Motor neuron (in vitro differentiated cells): ENCODE measurements at regions of chrX and their contacts with region 1.

Region 1: GRCh38 chrX:31658360-31658759 is 586.5 kb upstream of the FTHL17 start:
- ATAC-seq: no peak
- H3K4me3 ChIP-seq: no peak overlapping the region
- H3K27ac ChIP-seq: no peak overlapping the region
- H3K4me1 ChIP-seq: no peaks in the 10 kb centered on the region

Region 2: DNA sequence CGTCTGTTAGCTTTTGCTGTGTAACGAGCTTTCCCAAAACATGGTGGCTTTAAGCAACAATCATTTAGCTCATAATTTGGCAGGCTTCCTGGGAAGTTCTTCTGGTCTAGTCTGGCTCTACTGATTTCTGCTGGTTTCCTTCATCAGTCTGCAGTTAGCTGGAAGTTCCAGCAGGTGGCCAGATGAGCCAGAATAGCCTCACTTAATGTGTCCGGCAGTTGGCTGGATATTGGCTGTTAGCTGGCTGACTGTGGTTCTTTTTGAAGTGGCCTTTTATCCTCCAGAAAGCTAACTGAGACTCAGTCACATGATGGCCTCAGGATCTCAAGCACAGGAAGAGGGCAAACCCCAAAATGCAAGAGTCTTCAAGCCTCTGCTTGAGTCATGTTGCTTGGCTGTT is 621.5 kb before region 1 on chrX:
- in situ Hi-C with region 1: loop called in 3 of 9 experiments (anchors 10 to 25 kb)
- ATAC-seq: peak in 4 of 8 experiments; percentile 21 to 82 (median 74)
- H3K4me3 ChIP-seq: no peak overlapping the region
- H3K27ac ChIP-seq: no peak overlapping the region
- H3K4me1 ChIP-seq: peaks cover 2 to 3% of the 10 kb centered on the region in 2 donors

Region 3: GRCh38 chrX:31333181-31333831 is 325.1 kb before region 1 on chrX:
- in situ Hi-C with region 1: loop called in 1 of 9 experiments (anchors 25 kb)
- ATAC-seq: no peak
- H3K4me3 ChIP-seq: no peak overlapping the region
- H3K27ac ChIP-seq: no peak overlapping the region
- H3K4me1 ChIP-seq: no peaks in the 10 kb centered on the region

Region 4: DNA sequence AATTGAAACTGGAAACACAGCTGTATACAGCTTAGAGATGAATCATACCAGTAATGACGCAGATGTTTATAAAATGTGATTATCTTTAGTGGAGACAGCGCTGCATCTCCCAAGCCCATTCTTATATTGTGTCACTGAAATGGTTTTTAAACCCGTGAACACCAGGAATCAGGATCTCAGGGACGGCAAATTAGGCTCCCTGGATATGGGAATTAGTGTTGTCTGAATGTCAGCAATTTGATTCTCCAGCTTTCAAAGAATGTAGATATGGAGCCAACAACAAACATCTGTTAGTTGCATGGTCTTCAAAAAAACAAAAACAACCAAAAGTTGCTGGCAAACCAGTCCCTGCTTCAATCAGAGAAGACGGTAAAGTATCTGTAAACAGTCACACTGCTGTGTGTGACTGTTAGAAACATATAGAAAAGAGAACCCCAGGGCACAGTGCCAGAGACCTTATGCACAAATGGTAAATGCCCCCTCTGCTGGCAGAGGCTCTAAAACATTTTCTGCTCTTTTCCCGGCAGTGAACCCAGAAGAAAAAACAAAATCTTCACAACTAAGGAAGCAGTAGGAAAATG is 234.7 kb before region 1 on chrX:
- in situ Hi-C with region 1: no loop called
- ATAC-seq: peak in 5 of 8 experiments; percentile 32 to 68 (median 42)
- H3K4me3 ChIP-seq: no peak overlapping the region
- H3K27ac ChIP-seq: no peak overlapping the region
- H3K4me1 ChIP-seq: no peaks in the 10 kb centered on the region

Region 5: GRCh38 chrX:32281853-32282252 is 623.5 kb after region 1 on chrX:
- in situ Hi-C with region 1: no loop called
- ATAC-seq: no peak
- H3K4me3 ChIP-seq: no peak overlapping the region
- H3K27ac ChIP-seq: no peak overlapping the region
- H3K4me1 ChIP-seq: peaks cover 0 to 6% of the 10 kb centered on the region in 2 donors